Activated CD4-positive, alpha-beta T cell treated with anti-CD3 and anti-CD28 coated beads for 36 hours (primary cell): ENCODE measurements at regions of chr1 and their contacts with region 1.

Region 1: GRCh38 chr1:8848663-8849386 is 29.7 kb downstream of the ENO1 start:
- DNase-seq: peak; percentile 89
- ATAC-seq: peak; percentile 98
- H3K4me3 Mint-ChIP-seq: no peak overlapping the region
- H3K27ac Mint-ChIP-seq: no peak overlapping the region
- H3K4me1 Mint-ChIP-seq: peaks cover 7% of the 10 kb centered on the region
- H3K27me3 Mint-ChIP-seq: no peaks in the 10 kb centered on the region

Region 2: DNA sequence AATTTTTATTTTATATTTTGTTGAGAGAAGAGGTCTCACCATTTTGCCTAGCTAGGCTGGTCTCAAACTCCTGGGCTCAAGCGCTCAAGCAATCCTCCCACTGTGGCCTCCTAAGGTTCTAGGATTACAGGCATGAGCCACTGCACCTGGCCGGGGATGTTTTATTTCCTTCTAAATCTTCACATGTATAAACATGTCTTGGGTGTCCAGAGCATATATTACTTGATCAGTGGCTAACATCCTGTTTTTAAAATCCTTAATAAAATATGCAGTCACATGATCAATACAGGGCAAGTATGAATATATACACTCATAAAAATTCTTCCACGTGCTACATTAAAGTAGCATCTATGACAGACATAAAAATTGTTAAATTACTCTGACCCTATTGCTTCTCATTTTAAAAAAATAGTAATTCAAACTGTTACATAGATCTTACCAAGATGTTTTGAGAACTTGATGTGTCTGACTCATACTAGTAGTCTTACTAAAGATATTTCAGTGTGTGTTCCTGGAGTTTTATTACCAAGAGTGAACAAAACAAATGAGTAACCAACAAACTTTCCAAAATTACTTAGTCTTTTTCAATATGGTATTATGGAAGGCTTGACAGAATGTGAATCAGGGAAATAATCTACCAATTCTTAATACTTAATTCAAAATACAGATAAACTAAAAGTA is 308.4 kb before region 1 on chr1:
- CTCF ChIA-PET with region 1: no interaction called
- POLR2A ChIA-PET with region 1: no interaction called
- intact Hi-C with region 1: no loop called
- DNase-seq: no peak
- ATAC-seq: peak; percentile 84
- H3K4me3 Mint-ChIP-seq: no peak overlapping the region
- H3K27ac Mint-ChIP-seq: peak overlapping the region; percentile 80
- H3K4me1 Mint-ChIP-seq: peaks cover 32% of the 10 kb centered on the region
- H3K27me3 Mint-ChIP-seq: no peaks in the 10 kb centered on the region

Region 3: DNA sequence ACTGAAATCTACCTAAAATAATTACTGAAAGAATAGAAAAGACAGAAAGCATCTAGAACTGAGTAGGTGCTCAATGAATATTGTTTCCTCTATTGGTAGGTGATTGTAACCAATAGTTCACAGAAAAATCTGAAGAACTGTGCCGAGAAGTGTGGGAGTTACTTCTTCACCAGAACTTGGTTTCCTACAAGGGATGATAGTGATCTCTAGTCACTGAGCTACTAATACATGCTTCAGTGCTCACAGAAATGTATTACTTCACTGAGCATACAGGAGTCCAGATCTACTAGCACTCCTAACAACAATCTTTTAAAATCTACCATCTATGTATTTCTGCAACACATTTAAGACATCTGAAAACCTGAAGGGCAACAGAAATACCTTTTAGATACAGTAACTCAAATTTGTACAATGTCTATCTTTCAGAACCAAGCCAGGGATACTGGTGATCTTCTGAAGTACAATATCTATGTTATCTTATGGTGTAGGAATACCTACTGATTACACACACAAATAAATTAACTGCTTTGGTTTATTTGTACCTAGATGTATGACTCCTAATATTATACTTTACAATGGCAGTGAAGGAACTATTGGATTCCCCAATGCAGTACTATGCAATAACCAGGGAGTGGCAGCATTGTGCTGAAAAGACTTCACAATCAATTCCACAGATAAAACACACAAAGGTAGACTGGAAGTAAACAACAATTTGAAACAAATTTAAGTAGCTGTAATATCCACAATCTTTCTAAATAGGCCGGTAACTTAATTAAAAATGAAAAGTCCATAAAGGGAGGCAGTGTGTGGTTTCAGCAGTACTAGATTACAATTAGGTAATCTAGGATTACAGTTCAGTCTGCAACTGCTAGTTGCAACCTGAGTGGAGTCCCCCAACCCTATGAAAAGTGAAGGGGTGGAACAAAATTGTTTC is 287.9 kb before region 1 on chr1:
- CTCF ChIA-PET with region 1: interaction called, 51 read pairs
- POLR2A ChIA-PET with region 1: no interaction called
- intact Hi-C with region 1: loop called (anchors 1 kb)
- DNase-seq: peak; percentile 34
- ATAC-seq: peak; percentile 80
- H3K4me3 Mint-ChIP-seq: no peak overlapping the region
- H3K27ac Mint-ChIP-seq: peak overlapping the region; percentile 56
- H3K4me1 Mint-ChIP-seq: peaks cover 49% of the 10 kb centered on the region
- H3K27me3 Mint-ChIP-seq: no peaks in the 10 kb centered on the region

Region 4: DNA sequence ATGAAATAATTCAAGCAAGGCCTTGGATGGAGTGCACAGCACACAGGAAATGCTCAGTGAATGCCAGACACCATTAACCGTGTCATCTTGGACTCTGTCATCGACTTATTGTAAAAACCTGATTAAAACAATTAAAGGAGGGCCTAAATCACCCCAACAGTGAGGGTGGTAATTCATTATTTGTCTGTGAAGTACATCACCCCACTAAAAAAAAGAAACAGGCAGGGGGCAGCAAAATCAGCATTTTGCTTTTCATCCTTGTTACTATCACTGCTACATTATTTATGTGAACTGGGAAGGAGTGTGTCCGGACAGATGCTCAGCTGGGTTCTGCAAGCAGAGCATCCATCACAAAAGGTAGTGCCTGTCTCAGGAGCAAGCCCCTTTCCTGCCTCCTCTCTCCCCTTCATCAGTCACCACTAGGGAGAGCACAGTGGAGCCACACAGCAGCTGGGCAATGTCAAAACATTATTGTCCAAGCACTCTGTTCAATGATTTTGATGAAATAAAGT is 129.9 kb before region 1 on chr1:
- CTCF ChIA-PET with region 1: interaction called, 7 read pairs
- POLR2A ChIA-PET with region 1: no interaction called
- intact Hi-C with region 1: loop called in 1 of 2 experiments (anchors 5 kb)
- DNase-seq: no peak
- ATAC-seq: no peak
- H3K4me3 Mint-ChIP-seq: no peak overlapping the region
- H3K27ac Mint-ChIP-seq: no peak overlapping the region
- H3K4me1 Mint-ChIP-seq: peaks cover 22% of the 10 kb centered on the region
- H3K27me3 Mint-ChIP-seq: no peaks in the 10 kb centered on the region

Region 5: GRCh38 chr1:8740034-8740449 is 108.8 kb before region 1 on chr1:
- CTCF ChIA-PET with region 1: interaction called, 11 read pairs
- POLR2A ChIA-PET with region 1: no interaction called
- intact Hi-C with region 1: loop called in 1 of 2 experiments (anchors 10 kb)
- DNase-seq: no peak
- ATAC-seq: no peak
- H3K4me3 Mint-ChIP-seq: no peak overlapping the region
- H3K27ac Mint-ChIP-seq: no peak overlapping the region
- H3K4me1 Mint-ChIP-seq: peaks cover 12% of the 10 kb centered on the region
- H3K27me3 Mint-ChIP-seq: no peaks in the 10 kb centered on the region

Region 6: DNA sequence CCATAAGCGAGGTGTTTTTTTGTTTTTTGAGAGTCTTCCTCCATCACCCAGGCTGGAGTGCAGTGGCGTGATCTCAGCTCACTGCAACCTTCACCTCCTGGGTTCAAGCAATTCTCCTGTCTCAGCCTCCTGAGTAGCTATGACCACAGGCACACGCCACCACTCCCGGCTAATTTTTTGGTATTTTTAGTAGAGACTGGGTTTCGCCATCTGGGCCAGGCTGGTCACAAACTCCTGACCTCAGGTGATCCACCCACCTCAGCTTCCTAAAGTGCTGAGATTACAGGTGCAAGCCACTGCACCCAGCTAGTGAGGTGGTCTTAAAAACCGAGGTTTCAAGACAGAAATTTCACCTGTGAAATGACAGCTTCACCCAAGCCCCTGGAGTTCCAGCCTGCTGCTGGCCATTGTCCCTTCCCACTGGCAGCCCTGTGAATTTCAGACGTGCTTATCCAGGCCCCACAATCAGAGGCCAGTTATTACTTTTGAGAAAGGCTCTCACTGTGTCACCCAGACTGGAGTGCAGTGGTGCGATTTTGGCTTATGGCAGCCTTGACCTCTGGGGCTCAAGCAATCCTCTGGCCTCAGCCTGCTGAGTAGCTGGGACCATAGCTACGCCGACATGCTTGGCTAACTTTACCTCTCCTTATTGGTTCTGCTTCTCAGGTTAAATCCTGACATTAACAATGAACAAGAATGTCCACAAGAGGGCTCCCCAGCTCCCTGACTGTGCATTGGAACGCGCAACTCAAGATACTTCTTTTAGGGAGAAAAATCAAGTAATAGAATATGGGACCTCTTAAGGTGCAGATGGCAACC is 10.3 kb after region 1 on chr1:
- CTCF ChIA-PET with region 1: interaction called, 55 read pairs
- POLR2A ChIA-PET with region 1: interaction called, 8 read pairs
- intact Hi-C with region 1: no loop called
- DNase-seq: peak; percentile 67
- ATAC-seq: peak; percentile 55
- H3K4me3 Mint-ChIP-seq: peak overlapping the region; percentile 15
- H3K27ac Mint-ChIP-seq: peak overlapping the region; percentile 71
- H3K4me1 Mint-ChIP-seq: peaks cover 31% of the 10 kb centered on the region
- H3K27me3 Mint-ChIP-seq: no peaks in the 10 kb centered on the region

Region 7: GRCh38 chr1:8891401-8891800 is 42.6 kb after region 1 on chr1:
- CTCF ChIA-PET with region 1: no interaction called
- POLR2A ChIA-PET with region 1: no interaction called
- intact Hi-C with region 1: no loop called
- DNase-seq: no peak
- ATAC-seq: no peak
- H3K4me3 Mint-ChIP-seq: no peak overlapping the region
- H3K27ac Mint-ChIP-seq: no peak overlapping the region
- H3K4me1 Mint-ChIP-seq: peaks cover 5% of the 10 kb centered on the region
- H3K27me3 Mint-ChIP-seq: no peaks in the 10 kb centered on the region

Region 8: GRCh38 chr1:9213956-9214355 is 365.1 kb after region 1 on chr1:
- CTCF ChIA-PET with region 1: no interaction called
- POLR2A ChIA-PET with region 1: no interaction called
- intact Hi-C with region 1: no loop called
- DNase-seq: no peak
- ATAC-seq: no peak
- H3K4me3 Mint-ChIP-seq: no peak overlapping the region
- H3K27ac Mint-ChIP-seq: no peak overlapping the region
- H3K4me1 Mint-ChIP-seq: no peaks in the 10 kb centered on the region
- H3K27me3 Mint-ChIP-seq: peaks cover 11% of the 10 kb centered on the region